Ascending aorta (tissue), 2 donors: ENCODE measurements at regions of chr4 and their contacts with region 1.

Region 1: GRCh38 chr4:147096667-147097604 is 151.3 kb upstream of the TTC29 start:
- DNase-seq: no peak
- H3K4me3 ChIP-seq: no peak overlapping the region
- H3K27ac ChIP-seq: no peak overlapping the region
- H3K4me1 ChIP-seq: peaks cover 0 to 8% of the 10 kb centered on the region in 2 donors
- H3K27me3 ChIP-seq: no peaks in the 10 kb centered on the region
- CTCF ChIP-seq: peak; percentile 54 to 76 (median 58)

Region 2: DNA sequence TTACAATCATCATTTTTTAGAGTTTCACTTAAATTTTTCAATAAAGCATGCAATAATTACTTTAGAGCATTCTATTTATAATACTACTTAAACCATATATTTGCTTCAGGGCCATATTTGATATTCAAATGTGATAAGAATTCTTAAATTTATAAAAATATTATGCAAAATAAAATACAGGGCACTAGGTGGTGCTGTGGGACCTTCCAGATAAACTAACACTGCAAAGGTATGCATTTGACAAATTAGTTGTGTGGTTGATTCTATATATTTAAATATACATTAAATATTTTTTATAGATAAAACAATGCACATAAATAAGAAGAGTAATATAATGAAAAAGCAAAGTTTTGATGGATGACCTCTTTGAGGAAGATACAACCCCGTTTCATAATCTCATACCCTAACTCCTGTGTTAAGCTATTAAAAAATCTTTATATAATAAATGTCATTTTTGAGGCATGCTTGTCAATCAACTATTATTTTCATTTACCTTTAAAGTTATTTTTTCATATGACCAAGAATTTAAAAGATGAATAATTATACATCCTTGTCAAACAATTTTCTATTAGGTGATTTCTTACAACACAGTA is 754.2 kb before region 1 on chr4:
- intact Hi-C with region 1: loop called (anchors 5 kb)
- DNase-seq: no peak
- H3K4me3 ChIP-seq: no peak overlapping the region
- H3K27ac ChIP-seq: no peak overlapping the region
- H3K4me1 ChIP-seq: no peaks in the 10 kb centered on the region
- H3K27me3 ChIP-seq: no peaks in the 10 kb centered on the region
- CTCF ChIP-seq: peak in 2 of 3 experiments; percentile 34 to 69

Region 3: DNA sequence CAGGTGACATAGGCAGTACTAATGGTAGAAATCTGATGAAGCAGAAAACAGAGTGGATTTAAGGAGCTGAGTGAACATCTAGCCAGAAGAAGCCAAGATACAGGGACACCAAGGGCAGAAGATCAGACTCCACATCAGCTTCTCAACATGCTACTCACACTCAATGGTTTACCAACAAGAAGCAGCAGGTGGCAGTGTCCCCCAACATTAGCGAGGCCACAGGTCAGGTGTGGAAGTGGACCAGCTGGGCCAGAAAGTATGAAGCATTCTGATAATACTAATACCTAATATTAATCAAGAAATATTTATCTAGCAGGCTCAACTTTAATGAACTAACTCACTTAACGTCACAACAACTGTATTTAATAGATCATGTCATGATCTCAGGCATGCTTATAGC is 77.9 kb before region 1 on chr4:
- intact Hi-C with region 1: loop called (anchors 1 kb)
- DNase-seq: peak in 1 of 2 donors; percentile 78
- H3K4me3 ChIP-seq: no peak overlapping the region
- H3K27ac ChIP-seq: no peak overlapping the region
- H3K4me1 ChIP-seq: no peaks in the 10 kb centered on the region
- H3K27me3 ChIP-seq: no peaks in the 10 kb centered on the region
- CTCF ChIP-seq: peak; percentile 50 to 76 (median 71)

Region 4: GRCh38 chr4:147050356-147050765 is 46.6 kb before region 1 on chr4:
- intact Hi-C with region 1: loop called (anchors 5 kb)
- DNase-seq: no peak
- H3K4me3 ChIP-seq: peak overlapping the region in 1 of 2 donors; percentile 18
- H3K27ac ChIP-seq: peak overlapping the region in 1 of 2 donors; percentile 12
- H3K4me1 ChIP-seq: peaks cover 0 to 11% of the 10 kb centered on the region in 2 donors
- H3K27me3 ChIP-seq: no peaks in the 10 kb centered on the region
- CTCF ChIP-seq: no peak